Natural killer cell (primary cell): ENCODE measurements at regions of chr1 and their contacts with region 1.

Region 1: DNA sequence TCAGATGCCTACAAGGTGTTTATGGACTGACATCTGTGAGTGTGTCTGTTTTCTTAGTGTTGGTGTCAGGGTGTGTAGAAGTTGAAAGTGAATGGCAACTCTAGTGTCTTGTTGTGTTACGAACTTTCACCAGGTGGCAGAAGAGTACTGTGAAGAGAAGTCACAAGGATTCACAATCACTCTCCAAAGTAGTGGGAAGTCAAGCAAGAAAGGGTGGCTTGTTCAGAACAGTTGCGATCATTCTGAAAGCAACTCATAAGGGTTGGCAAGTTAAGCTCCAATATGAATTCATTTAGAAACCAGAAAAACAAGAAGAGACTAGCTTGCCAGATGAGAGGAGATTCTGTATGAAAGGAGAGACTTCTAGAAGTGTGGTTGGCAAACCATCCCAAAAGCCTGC is 86.1 kb downstream of the FASLG start:
- DNase-seq: peak in 1 of 2 donors; percentile 81
- ATAC-seq: peak; percentile 53 to 67 (median 62)
- H3K4me3 ChIP-seq: no peak overlapping the region
- H3K4me3 Mint-ChIP-seq: peak overlapping the region; percentile 61
- H3K27ac ChIP-seq: no peak overlapping the region
- H3K27ac Mint-ChIP-seq: peak overlapping the region; percentile 50 to 82
- H3K4me1 ChIP-seq: peaks cover 15% of the 10 kb centered on the region
- H3K4me1 Mint-ChIP-seq: peaks cover 31 to 35% of the 10 kb centered on the region in 2 donors
- H3K27me3 ChIP-seq: no peaks in the 10 kb centered on the region
- H3K27me3 Mint-ChIP-seq: no peaks in the 10 kb centered on the region
- CTCF ChIP-seq: peak; percentile 55

Region 2: DNA sequence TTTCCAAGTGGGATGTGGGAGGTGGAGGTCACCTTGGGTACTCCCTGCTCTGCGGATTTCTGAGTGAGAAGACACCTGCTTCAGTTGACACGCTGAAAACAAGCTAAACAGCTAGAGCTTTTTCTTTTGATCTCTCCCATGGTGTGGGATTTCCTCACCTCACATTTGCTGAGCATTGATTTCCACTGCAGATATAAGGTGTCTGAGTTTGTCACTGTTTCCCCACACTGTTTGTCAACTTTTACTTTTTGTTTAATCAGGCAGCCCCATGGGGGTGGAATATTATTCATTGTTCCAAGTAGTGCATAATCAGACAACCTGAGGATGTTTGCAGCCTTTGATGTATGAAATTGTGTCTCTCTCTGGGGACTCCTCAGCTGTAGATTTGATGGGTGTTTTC is 36.6 kb before region 1 on chr1:
- intact Hi-C with region 1: no loop called
- DNase-seq: peak in 1 of 2 donors; percentile 69
- ATAC-seq: peak; percentile 64 to 82 (median 67)
- H3K4me3 ChIP-seq: no peak overlapping the region
- H3K4me3 Mint-ChIP-seq: peak overlapping the region; percentile 74
- H3K27ac ChIP-seq: peak overlapping the region; percentile 20
- H3K27ac Mint-ChIP-seq: peak overlapping the region; percentile 81 to 88
- H3K4me1 ChIP-seq: peaks cover 46% of the 10 kb centered on the region
- H3K4me1 Mint-ChIP-seq: peaks cover 13 to 15% of the 10 kb centered on the region in 2 donors
- H3K27me3 ChIP-seq: no peaks in the 10 kb centered on the region
- H3K27me3 Mint-ChIP-seq: no peaks in the 10 kb centered on the region
- CTCF ChIP-seq: no peak

Region 3: GRCh38 chr1:172727956-172728603 is 16.9 kb before region 1 on chr1:
- intact Hi-C with region 1: loop called (anchors 1 kb)
- DNase-seq: peak; percentile 31 to 74
- ATAC-seq: peak; percentile 94 to 100 (median 99)
- H3K4me3 ChIP-seq: no peak overlapping the region
- H3K4me3 Mint-ChIP-seq: no peak overlapping the region
- H3K27ac ChIP-seq: no peak overlapping the region
- H3K27ac Mint-ChIP-seq: no peak overlapping the region
- H3K4me1 ChIP-seq: peaks cover 16% of the 10 kb centered on the region
- H3K4me1 Mint-ChIP-seq: peaks cover 23 to 27% of the 10 kb centered on the region in 2 donors
- H3K27me3 ChIP-seq: no peaks in the 10 kb centered on the region
- H3K27me3 Mint-ChIP-seq: peaks cover 0 to 16% of the 10 kb centered on the region in 2 donors
- CTCF ChIP-seq: peak; percentile 77

Region 4: GRCh38 chr1:172801771-172802322 is 56.8 kb after region 1 on chr1:
- intact Hi-C with region 1: no loop called
- DNase-seq: no peak
- ATAC-seq: no peak
- H3K4me3 ChIP-seq: no peak overlapping the region
- H3K4me3 Mint-ChIP-seq: no peak overlapping the region
- H3K27ac ChIP-seq: no peak overlapping the region
- H3K27ac Mint-ChIP-seq: no peak overlapping the region
- H3K4me1 ChIP-seq: no peaks in the 10 kb centered on the region
- H3K4me1 Mint-ChIP-seq: peaks cover 0 to 4% of the 10 kb centered on the region in 2 donors
- H3K27me3 ChIP-seq: no peaks in the 10 kb centered on the region
- H3K27me3 Mint-ChIP-seq: no peaks in the 10 kb centered on the region
- CTCF ChIP-seq: no peak

Region 5: GRCh38 chr1:173202430-173203145 is 457.6 kb after region 1 on chr1:
- intact Hi-C with region 1: loop called (anchors 1 kb)
- DNase-seq: peak in 1 of 2 donors; percentile 56
- ATAC-seq: no peak
- H3K4me3 ChIP-seq: no peak overlapping the region
- H3K4me3 Mint-ChIP-seq: no peak overlapping the region
- H3K27ac ChIP-seq: no peak overlapping the region
- H3K27ac Mint-ChIP-seq: peak overlapping the region in 1 of 2 donors; percentile 48
- H3K4me1 ChIP-seq: peaks cover 22% of the 10 kb centered on the region
- H3K4me1 Mint-ChIP-seq: peaks cover 34 to 42% of the 10 kb centered on the region in 2 donors
- H3K27me3 ChIP-seq: no peaks in the 10 kb centered on the region
- H3K27me3 Mint-ChIP-seq: no peaks in the 10 kb centered on the region
- CTCF ChIP-seq: no peak

Region 6: GRCh38 chr1:173409613-173410012 is 664.6 kb after region 1 on chr1:
- intact Hi-C with region 1: loop called (anchors 5 kb)
- DNase-seq: peak in 1 of 2 donors; percentile 51
- ATAC-seq: no peak
- H3K4me3 ChIP-seq: no peak overlapping the region
- H3K4me3 Mint-ChIP-seq: peak overlapping the region; percentile 25
- H3K27ac ChIP-seq: peak overlapping the region; percentile 8
- H3K27ac Mint-ChIP-seq: peak overlapping the region; percentile 74 to 87
- H3K4me1 ChIP-seq: peaks cover 43% of the 10 kb centered on the region
- H3K4me1 Mint-ChIP-seq: peaks cover 40 to 41% of the 10 kb centered on the region in 2 donors
- H3K27me3 ChIP-seq: no peaks in the 10 kb centered on the region
- H3K27me3 Mint-ChIP-seq: peaks cover 0 to 4% of the 10 kb centered on the region in 2 donors
- CTCF ChIP-seq: no peak

Region 7: GRCh38 chr1:173476664-173477285 is 731.8 kb after region 1 on chr1:
- intact Hi-C with region 1: loop called (anchors 2 kb)
- DNase-seq: peak; percentile 75 to 89
- ATAC-seq: peak; percentile 77 to 92 (median 85)
- H3K4me3 ChIP-seq: peak overlapping the region; percentile 85
- H3K4me3 Mint-ChIP-seq: peak overlapping the region; percentile 89
- H3K27ac ChIP-seq: peak overlapping the region; percentile 94
- H3K27ac Mint-ChIP-seq: peak overlapping the region; percentile 90 to 98
- H3K4me1 ChIP-seq: peaks cover 23% of the 10 kb centered on the region
- H3K4me1 Mint-ChIP-seq: peaks cover 58 to 69% of the 10 kb centered on the region in 2 donors
- H3K27me3 ChIP-seq: no peaks in the 10 kb centered on the region
- H3K27me3 Mint-ChIP-seq: no peaks in the 10 kb centered on the region
- CTCF ChIP-seq: no peak

Region 8: GRCh38 chr1:173824331-173825081 is 1079.5 kb after region 1 on chr1 and contains the starts of genes CENPL and DARS2:
- intact Hi-C with region 1: loop called (anchors 1 kb)
- DNase-seq: peak; percentile 81 to 96
- ATAC-seq: peak; percentile 84 to 93 (median 88)
- H3K4me3 ChIP-seq: peak within 1 kb of the TSS; percentile 94
- H3K4me3 Mint-ChIP-seq: peak within 1 kb of the TSS; percentile 99
- H3K27ac ChIP-seq: peak within 1 kb of the TSS; percentile 85
- H3K27ac Mint-ChIP-seq: peak within 1 kb of the TSS; percentile 95 to 98
- H3K4me1 ChIP-seq: peaks cover 17% of the 10 kb centered on the region
- H3K4me1 Mint-ChIP-seq: peaks cover 27 to 38% of the 10 kb centered on the region in 2 donors
- H3K27me3 ChIP-seq: no peaks in the 10 kb centered on the region
- H3K27me3 Mint-ChIP-seq: no peaks in the 10 kb centered on the region
- CTCF ChIP-seq: no peak
- total RNA-seq, gene CENPL: 8.8 to 16.4 (median 10.0) TPM
- total RNA-seq, gene DARS2: 5.0 to 8.4 (median 5.8) TPM

Region 9: GRCh38 chr1:174743654-174744561 is 1998.9 kb after region 1 on chr1:
- intact Hi-C with region 1: loop called (anchors 10 kb)
- DNase-seq: peak in 1 of 2 donors; percentile 74
- ATAC-seq: peak; percentile 52 to 64 (median 55)
- H3K4me3 ChIP-seq: no peak overlapping the region
- H3K4me3 Mint-ChIP-seq: no peak overlapping the region
- H3K27ac ChIP-seq: no peak overlapping the region
- H3K27ac Mint-ChIP-seq: no peak overlapping the region
- H3K4me1 ChIP-seq: no peaks in the 10 kb centered on the region
- H3K4me1 Mint-ChIP-seq: peaks cover 5 to 7% of the 10 kb centered on the region in 2 donors
- H3K27me3 ChIP-seq: no peaks in the 10 kb centered on the region
- H3K27me3 Mint-ChIP-seq: no peaks in the 10 kb centered on the region
- CTCF ChIP-seq: peak; percentile 71